Activated CD4-positive, alpha-beta T cell treated with anti-CD3 and anti-CD28 coated beads, Interleukin-2, amount 10 ng/mL, durations not matched to agents 7 days and 5 days (primary cell): ENCODE measurements at regions of chr6 and their contacts with region 1.

Region 1: GRCh38 chr6:31580807-31581433 is 1.3 kb downstream of the LTB start:
- DNase-seq: peak; percentile 88
- H3K4me3 Mint-ChIP-seq: peak overlapping the region; percentile 94
- H3K27ac Mint-ChIP-seq: peak overlapping the region; percentile 94
- H3K4me1 Mint-ChIP-seq: peaks cover 73% of the 10 kb centered on the region
- H3K27me3 Mint-ChIP-seq: no peaks in the 10 kb centered on the region

Region 2: GRCh38 chr6:31441365-31442267 is 139.3 kb before region 1 on chr6:
- CTCF ChIA-PET with region 1: no interaction called
- POLR2A ChIA-PET with region 1: no interaction called
- DNase-seq: peak; percentile 80
- H3K4me3 Mint-ChIP-seq: no peak overlapping the region
- H3K27ac Mint-ChIP-seq: no peak overlapping the region
- H3K4me1 Mint-ChIP-seq: peaks cover 4% of the 10 kb centered on the region
- H3K27me3 Mint-ChIP-seq: peaks cover 65% of the 10 kb centered on the region

Region 3: DNA sequence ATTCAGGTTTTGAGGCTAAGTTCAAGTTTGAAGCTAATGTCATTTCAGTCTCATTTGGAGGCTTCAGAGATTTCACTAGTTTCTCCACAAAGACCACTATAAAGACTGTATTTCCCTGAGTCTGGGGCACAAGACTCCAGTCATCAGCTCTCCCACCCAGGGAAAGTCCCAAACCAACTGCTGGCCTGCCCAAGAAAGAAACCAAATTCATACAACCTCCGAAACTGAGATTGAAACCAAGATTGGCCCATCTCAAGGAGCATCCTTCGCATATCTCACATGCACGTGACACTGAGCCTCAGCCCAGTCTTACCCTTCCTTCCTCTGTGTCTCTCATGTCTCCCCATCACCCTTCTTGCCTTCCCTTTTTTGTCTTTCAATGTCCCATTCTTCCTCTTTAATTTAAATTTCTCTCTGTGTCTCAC is 12.4 kb before region 1 on chr6:
- CTCF ChIA-PET with region 1: interaction called, 576 read pairs
- POLR2A ChIA-PET with region 1: interaction called, 4 read pairs
- DNase-seq: peak; percentile 87
- H3K4me3 Mint-ChIP-seq: peak overlapping the region; percentile 3
- H3K27ac Mint-ChIP-seq: peak overlapping the region; percentile 75
- H3K4me1 Mint-ChIP-seq: peaks cover 74% of the 10 kb centered on the region
- H3K27me3 Mint-ChIP-seq: peaks cover 21% of the 10 kb centered on the region

Region 4: GRCh38 chr6:31922942-31923341 is 342.0 kb after region 1 on chr6:
- CTCF ChIA-PET with region 1: no interaction called
- POLR2A ChIA-PET with region 1: no interaction called
- DNase-seq: peak; percentile 20
- H3K4me3 Mint-ChIP-seq: no peak overlapping the region
- H3K27ac Mint-ChIP-seq: no peak overlapping the region
- H3K4me1 Mint-ChIP-seq: no peaks in the 10 kb centered on the region
- H3K27me3 Mint-ChIP-seq: no peaks in the 10 kb centered on the region